ENCODE measurements at regions of chr20 and their contacts with region 1.

Region 1: DNA sequence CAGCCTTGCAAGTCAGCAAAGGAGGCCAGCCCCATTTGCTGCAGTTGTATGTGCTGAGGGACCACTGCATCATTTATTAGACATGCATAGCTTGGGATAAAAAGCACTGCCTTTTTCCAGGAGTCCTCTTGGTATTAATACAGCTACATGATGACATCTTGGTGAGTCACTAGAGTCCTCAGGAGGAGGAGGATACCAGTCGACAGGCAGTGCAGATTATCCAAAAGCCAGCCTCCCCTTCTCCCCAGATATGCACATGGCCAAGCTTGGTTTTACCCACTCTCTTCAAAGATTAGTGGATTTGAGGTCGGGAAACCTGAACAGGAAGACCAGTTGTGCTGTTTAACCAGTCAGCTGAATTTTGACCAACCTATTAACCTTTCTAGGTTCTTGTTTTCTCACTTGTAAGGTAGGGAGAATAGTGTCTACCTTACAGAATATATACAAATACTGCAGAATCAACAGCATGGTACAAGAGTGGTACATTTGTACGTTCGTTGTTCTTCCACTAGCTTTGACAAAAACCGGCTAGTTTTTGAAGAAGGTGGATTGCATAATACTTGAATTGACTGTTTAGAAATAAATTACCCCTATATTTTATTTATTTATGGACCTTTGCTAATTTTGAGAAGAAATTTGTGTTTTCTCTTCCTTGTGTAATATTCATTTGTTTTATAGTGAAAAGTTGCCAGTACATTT is 31.9 kb downstream of the VAPB start:
- DNase-seq: peak in 1 of 2 experiments; percentile 28
- H3K4me3 ChIP-seq: no peak overlapping the region
- H3K4me3 Mint-ChIP-seq: peak overlapping the region; percentile 50
- H3K27ac Mint-ChIP-seq: peak overlapping the region; percentile 89
- H3K4me1 ChIP-seq: peaks cover 65% of the 10 kb centered on the region
- H3K4me1 Mint-ChIP-seq: peaks cover 70% of the 10 kb centered on the region
- H3K27me3 ChIP-seq: no peaks in the 10 kb centered on the region
- H3K27me3 Mint-ChIP-seq: no peaks in the 10 kb centered on the region
- CTCF ChIP-seq: no peak

Region 2: DNA sequence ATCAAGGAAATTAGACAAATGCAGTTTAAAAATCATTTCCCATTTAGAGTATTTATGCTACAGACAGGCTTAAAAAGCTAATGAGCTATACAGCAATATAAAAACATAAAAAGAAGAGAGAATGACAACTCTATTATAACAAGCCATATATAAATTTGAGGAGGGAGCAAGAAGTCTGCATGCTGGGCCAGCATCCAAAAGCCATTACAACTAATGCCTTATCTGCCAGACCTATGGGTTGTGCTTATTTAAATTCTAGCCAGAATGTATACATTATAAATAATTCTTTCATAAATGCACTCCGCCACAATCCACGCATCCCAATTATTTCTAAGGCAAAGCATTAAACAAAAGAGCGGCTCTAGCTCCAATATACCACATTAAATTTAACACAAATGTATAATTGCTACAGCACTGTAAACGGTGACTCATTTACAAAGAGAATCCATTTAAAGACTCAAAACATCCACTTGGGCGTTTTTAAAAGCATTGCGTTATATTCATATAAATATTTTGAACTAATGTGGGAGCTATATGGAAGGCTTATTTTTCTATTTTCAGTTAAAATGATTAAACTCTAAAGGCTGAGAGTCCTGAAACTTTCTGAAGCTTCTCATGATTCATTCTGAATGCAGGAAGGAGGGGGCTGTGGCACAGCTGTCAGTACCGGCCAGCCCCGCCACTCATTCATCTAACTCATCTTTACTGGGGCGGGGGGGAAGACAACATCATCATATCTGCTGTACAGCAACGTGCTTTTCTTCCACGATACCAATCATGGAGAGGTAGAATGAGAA is 149.1 kb before region 1 on chr20:
- CTCF ChIA-PET with region 1: no interaction called
- POLR2A ChIA-PET with region 1: no interaction called
- intact Hi-C with region 1: no loop called
- DNase-seq: no peak
- H3K4me3 ChIP-seq: no peak overlapping the region
- H3K4me3 Mint-ChIP-seq: no peak overlapping the region
- H3K27ac Mint-ChIP-seq: no peak overlapping the region
- H3K4me1 ChIP-seq: no peaks in the 10 kb centered on the region
- H3K4me1 Mint-ChIP-seq: peaks cover 13% of the 10 kb centered on the region
- H3K27me3 ChIP-seq: no peaks in the 10 kb centered on the region
- H3K27me3 Mint-ChIP-seq: no peaks in the 10 kb centered on the region
- CTCF ChIP-seq: no peak

Region 3: DNA sequence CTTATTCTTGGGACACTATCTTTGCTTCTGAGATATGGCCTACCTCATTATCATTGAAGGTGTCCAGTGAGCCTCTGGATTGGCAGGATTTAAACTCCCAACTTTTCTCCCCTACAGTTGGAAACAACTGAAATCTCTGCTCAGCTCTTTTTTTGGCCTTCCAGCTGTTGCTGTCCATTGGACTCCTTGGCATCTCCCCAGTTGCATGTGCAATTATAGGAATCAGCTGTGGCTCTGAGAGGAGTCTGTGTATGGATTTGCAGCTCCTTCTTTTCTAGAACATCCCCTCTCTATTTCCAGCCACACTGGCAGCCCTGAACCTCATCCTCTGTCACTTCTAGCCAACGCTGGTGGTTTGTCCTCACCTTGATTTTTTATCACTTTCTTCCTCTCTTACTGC is 90.3 kb before region 1 on chr20:
- CTCF ChIA-PET with region 1: no interaction called
- POLR2A ChIA-PET with region 1: no interaction called
- intact Hi-C with region 1: loop called (anchors 10 kb)
- DNase-seq: no peak
- H3K4me3 ChIP-seq: no peak overlapping the region
- H3K4me3 Mint-ChIP-seq: no peak overlapping the region
- H3K27ac Mint-ChIP-seq: no peak overlapping the region
- H3K4me1 ChIP-seq: peaks cover 10% of the 10 kb centered on the region
- H3K4me1 Mint-ChIP-seq: peaks cover 31% of the 10 kb centered on the region
- H3K27me3 ChIP-seq: no peaks in the 10 kb centered on the region
- H3K27me3 Mint-ChIP-seq: no peaks in the 10 kb centered on the region
- CTCF ChIP-seq: no peak

Region 4: GRCh38 chr20:58388882-58389323 is 32.0 kb before region 1 on chr20 and contains the start of gene VAPB:
- CTCF ChIA-PET with region 1: interaction called, 7 read pairs
- POLR2A ChIA-PET with region 1: interaction called, 26 read pairs
- intact Hi-C with region 1: loop called (anchors 1 kb)
- DNase-seq: peak; percentile 98 to 100
- H3K4me3 ChIP-seq: peak within 1 kb of the TSS; percentile 74
- H3K4me3 Mint-ChIP-seq: peak within 1 kb of the TSS; percentile 86
- H3K27ac Mint-ChIP-seq: peak within 1 kb of the TSS; percentile 88
- H3K4me1 ChIP-seq: peaks cover 22% of the 10 kb centered on the region
- H3K4me1 Mint-ChIP-seq: peaks cover 36% of the 10 kb centered on the region
- H3K27me3 ChIP-seq: no peaks in the 10 kb centered on the region
- H3K27me3 Mint-ChIP-seq: no peaks in the 10 kb centered on the region
- CTCF ChIP-seq: no peak
- total RNA-seq, gene VAPB: 182 and 186 TPM in 2 replicates

Region 5: DNA sequence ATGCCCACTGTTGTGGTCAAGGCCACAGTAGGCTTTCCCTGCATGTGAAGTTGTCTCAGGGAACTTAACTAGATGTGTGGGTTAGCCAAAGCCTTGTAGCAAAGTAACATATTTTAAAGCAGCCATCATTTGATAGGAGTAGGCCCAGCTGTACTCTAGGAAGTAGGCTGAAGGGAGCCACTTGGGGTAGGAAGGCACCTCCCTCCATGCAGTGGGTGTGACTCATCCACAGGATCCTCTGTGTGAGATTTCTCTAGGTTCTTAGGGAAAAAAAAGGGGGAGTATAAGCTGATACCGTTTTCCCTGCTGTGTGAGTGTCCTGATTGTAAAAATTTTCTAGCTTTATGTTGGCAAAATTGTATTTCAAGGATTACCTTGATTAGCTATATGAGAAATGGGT is 12.8 kb after region 1 on chr20:
- CTCF ChIA-PET with region 1: interaction called, 5 read pairs
- POLR2A ChIA-PET with region 1: interaction called, 9 read pairs
- intact Hi-C with region 1: loop called (anchors 1 kb)
- DNase-seq: no peak
- H3K4me3 ChIP-seq: no peak overlapping the region
- H3K4me3 Mint-ChIP-seq: no peak overlapping the region
- H3K27ac Mint-ChIP-seq: peak overlapping the region; percentile 39
- H3K4me1 ChIP-seq: peaks cover 44% of the 10 kb centered on the region
- H3K4me1 Mint-ChIP-seq: peaks cover 43% of the 10 kb centered on the region
- H3K27me3 ChIP-seq: no peaks in the 10 kb centered on the region
- H3K27me3 Mint-ChIP-seq: no peaks in the 10 kb centered on the region
- CTCF ChIP-seq: no peak

Region 6: DNA sequence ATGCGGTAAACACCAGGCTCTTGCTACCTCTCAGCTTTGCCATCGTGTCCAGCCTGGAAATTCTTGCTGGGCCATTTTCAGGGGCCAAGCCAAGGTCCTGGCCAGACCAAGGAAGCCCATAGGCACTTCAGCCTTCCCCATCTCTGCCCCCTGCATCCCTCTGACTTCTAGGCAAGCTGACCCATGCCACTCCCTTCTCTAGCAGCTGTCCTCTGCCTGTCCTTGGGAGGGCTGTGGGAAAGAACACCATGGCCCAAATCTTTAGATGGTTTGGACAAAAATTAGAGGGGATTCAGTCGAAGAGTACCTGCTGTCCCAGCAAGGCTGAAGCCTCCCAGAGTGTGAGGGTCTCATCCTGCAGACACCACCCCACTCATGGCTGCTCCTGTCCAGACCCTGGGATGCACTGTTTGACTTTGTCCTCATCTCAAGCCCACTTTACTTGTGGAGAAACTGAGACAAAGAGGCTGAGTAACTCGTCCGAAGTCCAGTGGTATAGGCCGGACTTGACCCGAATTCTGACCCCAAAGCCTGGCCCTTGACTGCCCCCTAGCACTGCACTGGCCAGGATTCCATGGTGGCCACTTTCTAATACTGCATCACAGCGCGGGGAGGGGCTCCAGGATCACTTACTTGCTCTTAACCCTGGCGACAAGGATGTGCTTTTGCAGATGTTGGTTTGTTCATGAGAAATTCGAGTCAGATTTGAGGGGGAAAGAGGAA is 207.7 kb after region 1 on chr20:
- CTCF ChIA-PET with region 1: interaction called, 5 read pairs
- POLR2A ChIA-PET with region 1: interaction called, 10 read pairs
- intact Hi-C with region 1: no loop called
- DNase-seq: peak in 1 of 2 experiments; percentile 40
- H3K4me3 ChIP-seq: no peak overlapping the region
- H3K4me3 Mint-ChIP-seq: no peak overlapping the region
- H3K27ac Mint-ChIP-seq: no peak overlapping the region
- H3K4me1 ChIP-seq: no peaks in the 10 kb centered on the region; the same call in 1 of the 2 replicates
- H3K4me1 Mint-ChIP-seq: no peaks in the 10 kb centered on the region
- H3K27me3 ChIP-seq: no peaks in the 10 kb centered on the region
- H3K27me3 Mint-ChIP-seq: peaks cover 3% of the 10 kb centered on the region
- CTCF ChIP-seq: peak in 1 of 2 experiments; percentile 23

Region 7: GRCh38 chr20:58778760-58779159 is 357.8 kb after region 1 on chr20:
- CTCF ChIA-PET with region 1: no interaction called
- POLR2A ChIA-PET with region 1: no interaction called
- intact Hi-C with region 1: no loop called
- DNase-seq: no peak
- H3K4me3 ChIP-seq: no peak overlapping the region
- H3K4me3 Mint-ChIP-seq: no peak overlapping the region
- H3K27ac Mint-ChIP-seq: no peak overlapping the region
- H3K4me1 ChIP-seq: no peaks in the 10 kb centered on the region
- H3K4me1 Mint-ChIP-seq: no peaks in the 10 kb centered on the region
- H3K27me3 ChIP-seq: peaks cover 8% of the 10 kb centered on the region
- H3K27me3 Mint-ChIP-seq: peaks cover 41% of the 10 kb centered on the region
- CTCF ChIP-seq: no peak